Activated B cell treated with CpG ODN at 0.5 μM for 24 hours (primary cell): ENCODE measurements at regions of chr2 and their contacts with region 1.

Region 1: DNA sequence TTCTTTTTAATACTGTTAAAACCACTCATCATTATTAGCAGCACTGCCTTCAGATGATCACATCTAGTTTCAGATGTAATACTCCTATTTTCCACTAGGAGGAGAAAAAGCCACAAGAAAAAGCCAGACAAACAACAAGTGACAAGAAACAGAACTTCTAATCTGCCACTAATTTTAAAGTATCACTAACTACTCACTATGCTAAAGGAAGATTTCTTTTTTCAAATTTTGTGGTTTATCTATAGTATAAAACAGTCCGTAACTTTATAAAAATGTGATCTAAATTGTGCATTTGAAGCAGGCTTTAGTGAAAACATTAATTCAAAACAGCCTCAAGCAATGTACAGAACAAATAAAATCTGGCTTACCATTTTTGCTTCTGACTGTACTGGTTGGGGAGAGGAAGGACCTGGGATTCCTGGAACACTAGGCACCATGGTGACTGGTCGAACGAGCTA is 56.8 kb downstream of the ATF2 start:
- DNase-seq: no peak
- ATAC-seq: peak; percentile 47
- H3K4me3 Mint-ChIP-seq: no peak overlapping the region
- H3K27ac Mint-ChIP-seq: no peak overlapping the region
- H3K4me1 Mint-ChIP-seq: no peaks in the 10 kb centered on the region
- H3K27me3 Mint-ChIP-seq: no peaks in the 10 kb centered on the region
- CTCF ChIP-seq: peak; percentile 60

Region 2: GRCh38 chr2:175181104-175181876 is 70.1 kb after region 1 on chr2 and contains the start of gene ATP5MC3:
- CTCF ChIA-PET with region 1: no interaction called
- POLR2A ChIA-PET with region 1: no interaction called
- intact Hi-C with region 1: loop called (anchors 2 kb)
- DNase-seq: peak; percentile 87
- ATAC-seq: peak; percentile 89
- H3K4me3 Mint-ChIP-seq: peak within 1 kb of the TSS; percentile 94
- H3K27ac Mint-ChIP-seq: peak within 1 kb of the TSS; percentile 83
- H3K4me1 Mint-ChIP-seq: peaks cover 21% of the 10 kb centered on the region
- H3K27me3 Mint-ChIP-seq: no peaks in the 10 kb centered on the region
- CTCF ChIP-seq: no peak
- total RNA-seq, gene ATP5MC3: 147 and 163 TPM in 2 replicates

Region 3: GRCh38 chr2:175187378-175187777 is 76.1 kb after region 1 on chr2:
- CTCF ChIA-PET with region 1: interaction called, 4 read pairs
- POLR2A ChIA-PET with region 1: no interaction called
- intact Hi-C with region 1: loop called (anchors 1 kb)
- DNase-seq: no peak
- ATAC-seq: peak; percentile 21
- H3K4me3 Mint-ChIP-seq: no peak overlapping the region
- H3K27ac Mint-ChIP-seq: no peak overlapping the region
- H3K4me1 Mint-ChIP-seq: no peaks in the 10 kb centered on the region
- H3K27me3 Mint-ChIP-seq: peaks cover 19% of the 10 kb centered on the region
- CTCF ChIP-seq: no peak

Region 4: GRCh38 chr2:175233135-175233719 is 122.0 kb after region 1 on chr2:
- CTCF ChIA-PET with region 1: no interaction called
- POLR2A ChIA-PET with region 1: no interaction called
- intact Hi-C with region 1: no loop called
- DNase-seq: no peak
- ATAC-seq: no peak
- H3K4me3 Mint-ChIP-seq: no peak overlapping the region
- H3K27ac Mint-ChIP-seq: no peak overlapping the region
- H3K4me1 Mint-ChIP-seq: peaks cover 16% of the 10 kb centered on the region
- H3K27me3 Mint-ChIP-seq: peaks cover 7% of the 10 kb centered on the region
- CTCF ChIP-seq: no peak

Region 5: DNA sequence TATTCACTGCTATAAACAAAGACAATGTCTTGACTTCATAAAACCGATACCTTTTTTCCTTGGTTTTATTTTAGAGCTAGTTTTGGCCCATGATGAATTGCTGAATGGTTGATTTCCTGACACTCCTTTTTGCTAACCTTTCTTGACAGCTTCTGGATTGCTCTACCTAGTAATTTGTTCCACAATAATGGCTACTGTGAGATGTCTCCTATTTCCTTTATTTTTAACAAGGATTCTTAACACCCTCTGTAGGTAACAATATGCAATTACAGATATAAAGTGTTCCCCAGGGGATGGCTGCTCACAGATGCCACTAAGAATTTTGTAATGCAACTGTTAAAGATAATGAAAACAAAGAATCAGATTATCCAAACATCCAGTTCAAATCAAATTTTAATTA is 171.1 kb after region 1 on chr2:
- CTCF ChIA-PET with region 1: interaction called, 3 read pairs
- POLR2A ChIA-PET with region 1: no interaction called
- intact Hi-C with region 1: loop called (anchors 1 kb)
- DNase-seq: no peak
- ATAC-seq: peak; percentile 45
- H3K4me3 Mint-ChIP-seq: no peak overlapping the region
- H3K27ac Mint-ChIP-seq: no peak overlapping the region
- H3K4me1 Mint-ChIP-seq: no peaks in the 10 kb centered on the region
- H3K27me3 Mint-ChIP-seq: peaks cover 3% of the 10 kb centered on the region
- CTCF ChIP-seq: no peak

Region 6: DNA sequence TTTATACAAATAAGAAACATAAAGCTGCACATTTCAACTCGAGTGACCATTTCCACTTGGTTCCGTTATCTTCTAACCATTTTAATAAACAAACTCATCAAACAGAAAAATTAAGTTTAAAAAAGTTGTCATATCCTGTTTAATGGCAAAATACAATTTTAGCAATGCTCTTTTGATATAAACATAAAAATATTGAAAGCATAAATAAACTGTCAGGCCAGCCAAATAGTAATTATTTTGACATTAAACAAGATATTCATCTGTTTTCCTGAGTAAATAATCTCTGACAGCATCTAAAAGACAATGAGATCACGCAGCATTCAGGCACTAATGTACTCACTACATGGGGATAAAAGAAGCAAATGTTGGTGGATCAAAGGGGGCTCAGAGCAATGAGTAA is 215.6 kb after region 1 on chr2:
- CTCF ChIA-PET with region 1: interaction called, 4 read pairs
- POLR2A ChIA-PET with region 1: no interaction called
- intact Hi-C with region 1: loop called (anchors 1 kb)
- DNase-seq: no peak
- ATAC-seq: no peak
- H3K4me3 Mint-ChIP-seq: no peak overlapping the region
- H3K27ac Mint-ChIP-seq: no peak overlapping the region
- H3K4me1 Mint-ChIP-seq: no peaks in the 10 kb centered on the region
- H3K27me3 Mint-ChIP-seq: no peaks in the 10 kb centered on the region
- CTCF ChIP-seq: no peak

Region 7: GRCh38 chr2:175372704-175373701 is 261.8 kb after region 1 on chr2:
- CTCF ChIA-PET with region 1: no interaction called
- POLR2A ChIA-PET with region 1: no interaction called
- intact Hi-C with region 1: no loop called
- DNase-seq: no peak
- ATAC-seq: no peak
- H3K4me3 Mint-ChIP-seq: no peak overlapping the region
- H3K27ac Mint-ChIP-seq: no peak overlapping the region
- H3K4me1 Mint-ChIP-seq: no peaks in the 10 kb centered on the region
- H3K27me3 Mint-ChIP-seq: peaks cover 2% of the 10 kb centered on the region
- CTCF ChIP-seq: no peak